HepG2 (cell line): ENCODE measurements at regions of chr16 and their contacts with region 1.

Region 1: GRCh38 chr16:5604770-5605169 is 507.2 kb upstream of the EEF2KMT start:
- DNase-seq: peak; percentile 23
- ATAC-seq: peak; percentile 87
- H3K4me3 ChIP-seq: no peak overlapping the region
- H3K27ac ChIP-seq: no peak overlapping the region
- H3K4me1 ChIP-seq: no peaks in the 10 kb centered on the region
- H3K27me3 ChIP-seq: 0 out of 5 replicates have a peak, but pooled peaks cover 0 to 1% of the 10 kb centered on the region in 2 experiments
- CTCF ChIP-seq: peak; percentile 51
- EP300 ChIP-seq: no peak
- POLR2A ChIP-seq: no peak
- RAD21 ChIP-seq: no peak

Region 2: GRCh38 chr16:6926762-6927161 is 1322.0 kb after region 1 on chr16:
- CTCF ChIA-PET with region 1: no interaction called
- POLR2A ChIA-PET with region 1: no interaction called
- in situ Hi-C with region 1: loop called (anchors 5 kb)
- intact Hi-C with region 1: no loop called
- DNase-seq: no peak
- ATAC-seq: no peak
- H3K4me3 ChIP-seq: no peak overlapping the region
- H3K27ac ChIP-seq: no peak overlapping the region
- H3K4me1 ChIP-seq: no peaks in the 10 kb centered on the region
- H3K27me3 ChIP-seq: peaks cover 0 to 24% of the 10 kb centered on the region in 2 experiments; a peak in 2 of 5 replicates
- CTCF ChIP-seq: no peak
- EP300 ChIP-seq: no peak
- POLR2A ChIP-seq: no peak
- RAD21 ChIP-seq: no peak